ENCODE measurements at regions of chr7 and their contacts with region 1.

Region 1: DNA sequence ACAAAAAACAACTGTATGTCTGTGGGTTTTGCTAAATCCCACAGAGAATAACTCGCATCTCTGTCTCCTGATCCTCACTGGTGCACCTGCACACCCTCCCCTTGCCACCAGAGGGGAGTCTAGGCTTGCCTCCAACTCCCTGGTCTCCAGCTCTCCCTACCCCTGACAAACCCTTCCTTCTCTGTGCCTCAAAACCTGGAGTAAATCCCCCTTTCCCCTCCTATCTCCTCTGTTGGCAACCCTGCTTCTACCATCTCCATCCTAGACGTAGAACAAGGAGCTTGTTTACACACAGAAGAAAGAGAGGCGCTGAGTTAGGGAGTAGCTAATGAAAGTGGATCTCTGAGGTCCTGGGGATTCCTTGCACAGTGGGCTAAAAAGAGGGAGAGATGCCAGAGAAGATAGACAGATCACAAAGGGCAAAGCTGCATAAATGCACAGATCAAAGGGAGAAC is 6.0 kb downstream of the MBLAC1 start:
- DNase-seq: peak; percentile 79
- H3K4me3 Mint-ChIP-seq: no peak overlapping the region
- H3K27ac Mint-ChIP-seq: no peak overlapping the region
- H3K4me1 Mint-ChIP-seq: peaks cover 14% of the 10 kb centered on the region
- H3K27me3 Mint-ChIP-seq: no peaks in the 10 kb centered on the region

Region 2: GRCh38 chr7:99975782-99976521 is 156.8 kb before region 1 on chr7 and contains the start of gene AZGP1:
- CTCF ChIA-PET with region 1: interaction called, 5 read pairs
- POLR2A ChIA-PET with region 1: no interaction called
- intact Hi-C with region 1: loop called (anchors 2 kb)
- DNase-seq: no peak
- H3K4me3 Mint-ChIP-seq: no peak within 1 kb of the TSS
- H3K27ac Mint-ChIP-seq: no peak within 1 kb of the TSS
- H3K4me1 Mint-ChIP-seq: no peaks in the 10 kb centered on the region
- H3K27me3 Mint-ChIP-seq: no peaks in the 10 kb centered on the region
- total RNA-seq, gene AZGP1: not detected

Region 3: GRCh38 chr7:100148559-100149350 is 16.0 kb after region 1 on chr7 and contains the start of gene LAMTOR4:
- CTCF ChIA-PET with region 1: interaction called, 46 read pairs
- POLR2A ChIA-PET with region 1: interaction called, 3 read pairs
- intact Hi-C with region 1: loop called (anchors 2 kb)
- DNase-seq: peak; percentile 99
- H3K4me3 Mint-ChIP-seq: peak within 1 kb of the TSS; percentile 95
- H3K27ac Mint-ChIP-seq: peak within 1 kb of the TSS; percentile 94
- H3K4me1 Mint-ChIP-seq: peaks cover 25% of the 10 kb centered on the region
- H3K27me3 Mint-ChIP-seq: no peaks in the 10 kb centered on the region
- total RNA-seq, gene LAMTOR4: 136 to 151 TPM

Region 4: GRCh38 chr7:100215895-100216294 is 83.2 kb after region 1 on chr7:
- CTCF ChIA-PET with region 1: interaction called, 43 read pairs
- POLR2A ChIA-PET with region 1: interaction called, 3 read pairs
- intact Hi-C with region 1: loop called (anchors 2 kb)
- DNase-seq: no peak
- H3K4me3 Mint-ChIP-seq: no peak overlapping the region
- H3K27ac Mint-ChIP-seq: peak overlapping the region; percentile 46
- H3K4me1 Mint-ChIP-seq: peaks cover 49% of the 10 kb centered on the region
- H3K27me3 Mint-ChIP-seq: no peaks in the 10 kb centered on the region

Region 5: DNA sequence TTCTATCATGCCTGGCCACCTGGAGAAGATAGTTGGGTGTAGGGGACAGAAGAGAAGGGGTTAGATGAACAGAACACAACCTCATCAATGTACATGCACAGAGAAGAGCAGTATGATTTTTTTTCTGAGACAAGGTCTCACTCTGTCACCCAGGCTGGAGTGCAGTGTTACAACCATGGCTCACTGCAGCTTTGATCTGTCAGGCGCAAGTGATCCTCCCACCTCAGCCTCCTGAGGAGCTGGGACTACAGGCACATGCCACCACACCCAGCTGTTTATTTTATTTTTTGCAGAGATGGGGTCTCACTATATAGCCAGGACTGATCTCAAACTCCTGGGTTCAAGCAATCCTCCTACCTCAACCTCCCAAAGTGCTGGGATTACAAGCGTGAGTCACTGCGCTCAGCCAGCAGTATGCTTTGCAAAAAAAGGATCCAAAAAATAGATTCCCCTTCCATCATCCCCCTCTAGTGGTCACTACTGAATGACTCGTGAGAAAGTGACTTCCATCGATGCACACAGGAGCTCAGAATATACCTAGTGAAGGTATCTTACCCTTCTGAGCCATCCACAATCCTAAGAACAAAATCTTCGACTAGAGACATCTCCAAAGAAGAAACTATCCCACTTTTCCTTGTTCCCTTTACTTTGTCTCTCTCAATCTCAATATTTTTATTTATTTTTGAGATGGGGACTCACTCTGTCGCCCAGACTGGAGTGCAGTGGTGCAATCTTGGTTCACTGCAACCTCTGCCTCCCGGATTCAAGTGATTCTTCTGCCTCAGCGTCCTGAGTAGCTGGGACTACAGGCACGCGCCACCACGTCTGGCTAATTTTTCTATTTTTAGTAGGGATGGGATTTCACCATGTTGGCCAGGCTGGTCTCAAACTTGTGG is 274.8 kb after region 1 on chr7:
- CTCF ChIA-PET with region 1: interaction called, 36 read pairs
- POLR2A ChIA-PET with region 1: no interaction called
- intact Hi-C with region 1: loop called (anchors 1 kb)
- DNase-seq: peak; percentile 45
- H3K4me3 Mint-ChIP-seq: no peak overlapping the region
- H3K27ac Mint-ChIP-seq: no peak overlapping the region
- H3K4me1 Mint-ChIP-seq: no peaks in the 10 kb centered on the region
- H3K27me3 Mint-ChIP-seq: no peaks in the 10 kb centered on the region

Measured in activated CD4-positive, alpha-beta memory T cell treated with anti-CD3 and anti-CD28 coated beads for 36 hours (primary cell).